ENCODE measurements at regions of chr4 and their contacts with region 1.

Region 1: GRCh38 chr4:144174401-144175067 is 34.0 kb upstream of the GYPA start:
- DNase-seq: no peak
- H3K4me3 ChIP-seq: no peak overlapping the region
- H3K27ac ChIP-seq: no peak overlapping the region
- H3K4me1 ChIP-seq: peaks cover 0 to 5% (median 0%) of the 10 kb centered on the region in 3 donors
- H3K27me3 ChIP-seq: no peaks in the 10 kb centered on the region
- CTCF ChIP-seq: peak in 5 of 6 experiments; percentile 17 to 62 (median 37)
- POLR2A ChIP-seq: no peak

Region 2: GRCh38 chr4:143667461-143667860 is 507.1 kb before region 1 on chr4:
- intact Hi-C with region 1: no loop called
- DNase-seq: no peak
- H3K4me3 ChIP-seq: no peak overlapping the region
- H3K27ac ChIP-seq: no peak overlapping the region
- H3K4me1 ChIP-seq: no peaks in the 10 kb centered on the region
- H3K27me3 ChIP-seq: no peaks in the 10 kb centered on the region
- CTCF ChIP-seq: no peak
- POLR2A ChIP-seq: no peak

Region 3: GRCh38 chr4:143882892-143883291 is 291.6 kb before region 1 on chr4:
- intact Hi-C with region 1: no loop called
- DNase-seq: no peak
- H3K4me3 ChIP-seq: no peak overlapping the region
- H3K27ac ChIP-seq: no peak overlapping the region
- H3K4me1 ChIP-seq: no peaks in the 10 kb centered on the region
- H3K27me3 ChIP-seq: no peaks in the 10 kb centered on the region
- CTCF ChIP-seq: no peak
- POLR2A ChIP-seq: no peak

Region 4: GRCh38 chr4:144449611-144450010 is 275.1 kb after region 1 on chr4:
- intact Hi-C with region 1: no loop called
- DNase-seq: no peak
- H3K4me3 ChIP-seq: no peak overlapping the region
- H3K27ac ChIP-seq: no peak overlapping the region
- H3K4me1 ChIP-seq: no peaks in the 10 kb centered on the region
- H3K27me3 ChIP-seq: no peaks in the 10 kb centered on the region
- CTCF ChIP-seq: no peak
- POLR2A ChIP-seq: no peak

Region 5: GRCh38 chr4:145061318-145061920 is 886.9 kb after region 1 on chr4:
- intact Hi-C with region 1: loop called (anchors 10 kb)
- DNase-seq: no peak
- H3K4me3 ChIP-seq: no peak overlapping the region
- H3K27ac ChIP-seq: no peak overlapping the region
- H3K4me1 ChIP-seq: no peaks in the 10 kb centered on the region
- H3K27me3 ChIP-seq: no peaks in the 10 kb centered on the region
- CTCF ChIP-seq: peak in 3 of 6 experiments; percentile 40 to 59 (median 55)
- POLR2A ChIP-seq: no peak